Head of caudate nucleus (tissue), 42 donors: ENCODE measurements at regions of chr18 and their contacts with region 1.

Region 1: GRCh38 chr18:79246348-79247108 is 149.2 kb upstream of the NFATC1 start:
- DNase-seq: peak; percentile 71 to 94 (median 84)

Region 2: DNA sequence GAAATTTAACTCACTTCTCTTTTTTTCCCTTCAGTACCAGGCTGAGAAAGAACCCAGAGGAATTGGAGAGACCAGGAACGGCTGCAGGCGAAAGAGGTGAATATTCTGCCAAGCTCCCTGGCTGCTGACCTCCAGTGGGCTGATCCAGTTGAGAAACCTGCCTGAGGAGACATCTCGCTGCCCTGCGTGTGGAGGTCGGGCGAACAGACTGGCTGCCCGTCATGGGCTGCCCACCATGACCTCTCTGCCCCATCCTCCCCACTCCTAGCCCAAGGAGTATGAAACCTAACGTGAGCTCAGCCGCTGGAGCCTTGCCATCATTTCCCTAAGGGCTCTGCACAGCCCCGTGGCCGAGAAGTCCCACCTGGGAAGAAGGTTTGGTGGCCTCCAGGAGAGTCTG is 415.7 kb before region 1 on chr18:
- intact Hi-C with region 1: no loop called
- DNase-seq: no peak

Region 3: GRCh38 chr18:79042276-79042675 is 204.3 kb before region 1 on chr18:
- intact Hi-C with region 1: no loop called
- DNase-seq: no peak

Region 4: DNA sequence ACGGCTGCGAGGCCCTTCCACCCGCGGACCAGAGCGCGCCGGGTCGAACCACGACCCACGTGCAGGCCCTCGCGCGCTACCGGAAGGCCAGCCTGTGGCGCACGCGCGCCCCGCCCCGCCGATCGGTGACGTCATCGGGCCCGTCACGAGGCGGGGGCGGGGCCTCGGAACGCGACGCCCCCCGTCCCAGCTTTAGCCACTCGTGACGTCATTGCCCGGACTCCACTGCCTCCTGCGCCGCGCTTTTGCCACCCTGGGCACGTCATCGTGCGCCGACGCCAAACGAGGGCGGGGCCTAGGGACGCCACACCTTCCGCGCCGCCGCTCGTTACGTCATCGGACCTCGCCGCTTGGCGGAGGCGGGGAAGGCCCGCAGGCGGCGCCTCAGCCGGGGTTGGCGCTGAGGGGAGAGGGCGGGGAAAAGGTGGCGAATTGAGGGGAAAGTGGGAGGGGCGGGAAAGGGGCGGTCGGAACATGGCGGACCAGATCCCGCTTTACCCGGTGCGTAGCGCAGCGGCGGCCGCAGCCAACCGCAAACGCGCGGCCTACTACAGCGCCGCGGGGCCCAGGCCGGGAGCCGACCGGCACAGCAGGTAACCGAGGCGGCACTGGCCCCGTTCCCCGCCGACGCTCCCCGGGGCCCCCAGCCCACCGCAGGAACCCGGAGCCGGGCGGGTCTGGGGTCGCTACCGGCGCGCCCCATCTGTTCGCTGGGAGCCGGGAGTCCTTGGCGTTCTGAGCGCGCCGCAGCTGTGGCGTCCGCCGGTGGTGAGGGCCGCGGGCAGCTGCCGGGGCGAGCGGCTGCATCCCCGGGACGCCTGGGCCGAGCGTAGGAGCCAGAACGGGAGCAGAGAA is 177.4 kb before region 1 on chr18 and contains the start of gene ATP9B:
- intact Hi-C with region 1: loop called (anchors 10 kb)
- DNase-seq: peak; percentile 93 to 100 (median 98)

Region 5: GRCh38 chr18:79302120-79302519 is 55.6 kb after region 1 on chr18:
- intact Hi-C with region 1: no loop called
- DNase-seq: peak in 1 of 42 donors; percentile 19